SK-N-SH (cell line): ENCODE measurements at regions of chr4 and their contacts with region 1.

Region 1: DNA sequence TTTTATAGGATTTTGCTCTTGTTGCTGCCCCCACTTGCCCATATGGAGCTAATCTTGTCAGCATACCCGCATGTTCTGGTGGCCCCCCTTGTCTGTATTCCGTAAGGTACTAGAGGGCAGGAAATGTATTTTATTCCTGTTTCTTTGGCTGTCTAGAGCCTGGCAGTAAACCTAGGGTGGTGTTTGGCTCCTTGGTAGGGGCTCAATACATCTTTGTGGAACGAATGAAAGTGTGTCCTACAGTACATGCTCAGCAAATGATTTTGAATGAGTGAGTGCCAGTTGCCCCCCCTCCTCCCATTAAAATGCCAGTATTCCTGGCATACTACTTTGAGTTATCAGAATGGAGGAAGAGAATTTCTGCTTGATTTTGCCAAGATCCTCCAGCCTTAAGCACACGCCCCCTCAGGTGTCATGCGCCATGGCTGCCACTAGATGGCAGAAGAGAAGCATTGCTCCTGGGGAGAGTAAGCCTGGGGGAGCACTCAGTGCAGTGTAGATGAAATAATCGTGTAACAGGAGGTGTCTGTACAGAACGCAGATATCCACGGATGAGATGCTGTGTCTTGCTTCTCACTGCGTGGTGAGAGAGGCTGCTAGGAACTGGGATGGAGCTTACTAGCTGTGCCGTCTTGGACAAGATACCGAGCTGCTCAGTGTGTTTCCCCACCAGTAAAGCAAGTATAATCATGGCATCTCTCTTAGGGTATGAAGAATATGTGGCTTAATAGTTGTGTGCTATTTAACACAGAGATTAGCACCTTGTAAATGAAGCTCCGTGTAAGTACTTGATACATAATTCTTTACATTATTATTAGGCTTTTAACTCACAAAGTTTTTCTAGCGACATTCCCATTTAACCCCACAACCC is 17.2 kb upstream of the RNF212 start:
- DNase-seq: peak; percentile 79
- H3K4me3 ChIP-seq: peak overlapping the region in 1 of 2 experiments; percentile 40; a peak in 1 of 4 replicates
- H3K27ac ChIP-seq: no peak overlapping the region
- H3K4me1 ChIP-seq: peaks cover 0 to 3% of the 10 kb centered on the region in 2 experiments; a peak in 1 of 4 replicates
- H3K27me3 ChIP-seq: peaks cover 7% of the 10 kb centered on the region; the same call in 1 of the 2 replicates
- CTCF ChIP-seq: peak; percentile 99
- EP300 ChIP-seq: no peak
- RAD21 ChIP-seq: peak; percentile 95

Region 2: DNA sequence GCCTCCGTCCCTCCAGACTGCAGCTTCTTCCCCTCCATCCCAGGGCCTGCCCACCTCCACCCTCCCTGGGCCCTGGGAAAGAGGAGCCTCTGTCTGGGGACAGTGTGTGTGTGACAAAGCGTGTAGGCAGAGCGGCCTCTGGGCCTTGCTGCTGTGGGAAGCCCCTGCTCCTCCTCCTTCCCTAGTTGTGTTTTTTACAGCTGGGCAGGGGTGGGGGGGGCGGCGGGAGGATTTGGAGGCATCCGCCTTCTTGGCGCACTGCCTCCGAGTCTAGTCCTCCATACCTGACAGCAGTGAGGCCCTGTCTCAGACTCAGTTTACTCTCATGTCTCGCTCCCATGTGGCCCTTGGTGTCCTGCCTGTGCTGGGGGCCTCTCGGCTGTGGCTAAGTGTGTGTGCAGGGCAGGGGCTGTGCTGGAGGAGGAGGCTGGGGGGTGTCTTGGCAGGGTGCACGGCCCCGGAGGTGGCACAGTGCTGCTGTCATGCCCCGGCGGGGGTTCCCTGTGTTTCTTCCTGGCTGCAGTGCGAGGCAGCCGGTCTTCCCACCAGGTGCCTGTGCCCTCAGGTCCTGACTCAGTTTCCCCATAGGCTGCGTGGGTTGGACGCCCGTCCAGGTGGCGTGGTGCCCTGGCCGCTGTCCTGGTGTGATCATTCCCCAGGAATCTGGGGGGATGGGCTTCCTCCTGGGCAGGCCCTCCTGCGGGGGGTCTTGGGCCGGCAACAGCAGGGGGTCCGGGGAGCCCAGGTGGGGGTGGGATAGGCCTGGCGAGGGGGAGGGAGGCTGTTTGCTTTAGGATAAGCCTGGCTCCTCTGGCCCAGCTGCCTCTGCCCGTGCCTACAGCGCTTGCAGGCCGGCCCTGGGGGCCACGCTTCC is 112.2 kb before region 1 on chr4:
- CTCF ChIA-PET with region 1: no interaction called
- POLR2A ChIA-PET with region 1: no interaction called
- DNase-seq: no peak
- H3K4me3 ChIP-seq: no peak overlapping the region
- H3K27ac ChIP-seq: no peak overlapping the region
- H3K4me1 ChIP-seq: no peaks in the 10 kb centered on the region
- H3K27me3 ChIP-seq: no peaks in the 10 kb centered on the region
- CTCF ChIP-seq: no peak
- EP300 ChIP-seq: no peak
- RAD21 ChIP-seq: no peak

Region 3: GRCh38 chr4:1116838-1117237 is 13.7 kb before region 1 on chr4:
- CTCF ChIA-PET with region 1: interaction called, 31 read pairs
- POLR2A ChIA-PET with region 1: no interaction called
- DNase-seq: no peak
- H3K4me3 ChIP-seq: no peak overlapping the region
- H3K27ac ChIP-seq: no peak overlapping the region
- H3K4me1 ChIP-seq: no peaks in the 10 kb centered on the region; a peak in 1 of 4 replicates
- H3K27me3 ChIP-seq: peaks cover 6% of the 10 kb centered on the region; the same call in 1 of the 2 replicates
- CTCF ChIP-seq: no peak
- EP300 ChIP-seq: no peak
- RAD21 ChIP-seq: no peak

Region 4: DNA sequence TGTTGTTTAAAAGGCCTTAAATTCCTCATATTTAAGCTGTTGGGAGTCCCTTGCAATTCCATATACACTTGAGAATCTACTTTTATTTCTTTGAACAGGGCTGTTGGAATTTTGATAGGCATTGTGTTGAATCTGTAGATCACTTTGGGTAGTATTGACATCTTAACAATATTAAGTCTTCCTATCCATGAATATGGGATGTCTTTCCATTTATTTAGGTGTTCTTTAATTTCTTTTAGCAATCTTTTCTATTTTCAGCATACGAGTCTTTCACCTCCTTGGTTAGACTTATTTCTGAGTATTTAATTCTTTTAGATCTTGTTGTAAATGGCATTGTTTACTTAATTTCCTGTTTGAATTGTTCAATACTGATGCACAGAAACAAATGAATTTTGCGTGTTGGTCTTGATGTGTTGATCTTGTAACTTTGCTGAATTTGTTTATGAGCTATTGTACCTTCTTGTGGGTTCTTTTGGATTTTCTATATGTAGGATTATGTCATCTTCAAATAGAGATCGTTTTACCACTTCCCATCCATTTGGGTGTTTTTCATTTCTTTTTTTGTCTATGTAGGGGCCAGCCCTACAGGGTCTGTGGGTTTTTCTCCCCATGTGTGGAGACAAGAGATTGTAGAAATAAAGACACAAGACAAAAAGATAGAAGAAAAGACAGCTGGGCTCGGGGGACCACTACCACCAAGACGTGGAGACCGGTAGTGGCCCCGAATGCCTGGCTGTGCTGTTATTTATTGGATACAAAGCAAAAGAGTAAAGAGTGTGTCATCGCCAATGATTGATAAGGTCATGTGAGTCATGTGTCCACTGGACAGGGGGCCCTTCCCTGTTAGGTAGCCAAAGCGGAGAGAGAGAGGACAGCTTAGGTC is 136.6 kb after region 1 on chr4:
- CTCF ChIA-PET with region 1: interaction called, 20 read pairs
- POLR2A ChIA-PET with region 1: no interaction called
- DNase-seq: no peak
- H3K4me3 ChIP-seq: no peak overlapping the region
- H3K27ac ChIP-seq: no peak overlapping the region
- H3K4me1 ChIP-seq: no peaks in the 10 kb centered on the region
- H3K27me3 ChIP-seq: no peaks in the 10 kb centered on the region
- CTCF ChIP-seq: no peak
- EP300 ChIP-seq: no peak
- RAD21 ChIP-seq: no peak

Region 5: GRCh38 chr4:1346781-1347409 is 216.3 kb after region 1 on chr4 and contains the start of gene UVSSA:
- CTCF ChIA-PET with region 1: interaction called, 18 read pairs
- POLR2A ChIA-PET with region 1: no interaction called
- DNase-seq: peak; percentile 99
- H3K4me3 ChIP-seq: peak within 1 kb of the TSS; percentile 77 to 97
- H3K27ac ChIP-seq: peak within 1 kb of the TSS; percentile 89
- H3K4me1 ChIP-seq: peaks cover 0 to 20% of the 10 kb centered on the region in 2 experiments; a peak in 1 of 4 replicates
- H3K27me3 ChIP-seq: no peaks in the 10 kb centered on the region
- CTCF ChIP-seq: no peak
- EP300 ChIP-seq: no peak
- RAD21 ChIP-seq: no peak
- polyA plus RNA-seq, gene UVSSA: 14.5 and 14.9 TPM in 2 replicates

Region 6: GRCh38 chr4:1478766-1479355 is 348.3 kb after region 1 on chr4:
- CTCF ChIA-PET with region 1: no interaction called
- POLR2A ChIA-PET with region 1: no interaction called
- DNase-seq: peak; percentile 48
- H3K4me3 ChIP-seq: no peak overlapping the region
- H3K27ac ChIP-seq: no peak overlapping the region
- H3K4me1 ChIP-seq: no peaks in the 10 kb centered on the region
- H3K27me3 ChIP-seq: no peaks in the 10 kb centered on the region
- CTCF ChIP-seq: no peak
- EP300 ChIP-seq: no peak
- RAD21 ChIP-seq: no peak